Activated CD8-positive, alpha-beta T cell treated with anti-CD3 and anti-CD28 coated beads for 36 hours (primary cell): ENCODE measurements at regions of chrX and their contacts with region 1.

Region 1: GRCh38 chrX:48737213-48737938 is 24.2 kb upstream of the GLOD5 start:
- DNase-seq: peak; percentile 92
- ATAC-seq: peak; percentile 97
- H3K4me3 Mint-ChIP-seq: peak overlapping the region; percentile 95
- H3K27ac Mint-ChIP-seq: peak overlapping the region; percentile 96
- H3K4me1 Mint-ChIP-seq: peaks cover 14% of the 10 kb centered on the region
- H3K27me3 Mint-ChIP-seq: no peaks in the 10 kb centered on the region
- CTCF ChIP-seq: no peak

Region 2: GRCh38 chrX:48683411-48683982 is 53.9 kb before region 1 on chrX and contains the start of gene WAS:
- CTCF ChIA-PET with region 1: no interaction called
- POLR2A ChIA-PET with region 1: interaction called, 6 read pairs
- intact Hi-C with region 1: loop called (anchors 5 kb)
- DNase-seq: peak; percentile 74
- ATAC-seq: peak; percentile 93
- H3K4me3 Mint-ChIP-seq: peak within 1 kb of the TSS; percentile 80
- H3K27ac Mint-ChIP-seq: peak within 1 kb of the TSS; percentile 98
- H3K4me1 Mint-ChIP-seq: peaks cover 50% of the 10 kb centered on the region
- H3K27me3 Mint-ChIP-seq: no peaks in the 10 kb centered on the region
- CTCF ChIP-seq: no peak
- total RNA-seq, gene WAS: 81.6 to 81.9 TPM

Region 3: GRCh38 chrX:48696301-48697181 is 40.8 kb before region 1 on chrX and contains the start of gene SUV39H1:
- CTCF ChIA-PET with region 1: no interaction called
- POLR2A ChIA-PET with region 1: interaction called, 15 read pairs
- intact Hi-C with region 1: no loop called
- DNase-seq: peak; percentile 87
- ATAC-seq: peak; percentile 94
- H3K4me3 Mint-ChIP-seq: peak within 1 kb of the TSS; percentile 81
- H3K27ac Mint-ChIP-seq: peak within 1 kb of the TSS; percentile 94
- H3K4me1 Mint-ChIP-seq: peaks cover 26% of the 10 kb centered on the region
- H3K27me3 Mint-ChIP-seq: no peaks in the 10 kb centered on the region
- CTCF ChIP-seq: no peak
- total RNA-seq, gene SUV39H1: 26.8 to 28.4 TPM

Region 4: GRCh38 chrX:48714573-48714972 is 22.8 kb before region 1 on chrX:
- CTCF ChIA-PET with region 1: no interaction called
- POLR2A ChIA-PET with region 1: interaction called, 14 read pairs
- intact Hi-C with region 1: no loop called
- DNase-seq: no peak
- ATAC-seq: peak; percentile 20
- H3K4me3 Mint-ChIP-seq: no peak overlapping the region
- H3K27ac Mint-ChIP-seq: peak overlapping the region; percentile 93
- H3K4me1 Mint-ChIP-seq: peaks cover 83% of the 10 kb centered on the region
- H3K27me3 Mint-ChIP-seq: no peaks in the 10 kb centered on the region
- CTCF ChIP-seq: no peak

Region 5: GRCh38 chrX:48770296-48770695 is 32.9 kb after region 1 on chrX:
- CTCF ChIA-PET with region 1: no interaction called
- POLR2A ChIA-PET with region 1: no interaction called
- intact Hi-C with region 1: no loop called
- DNase-seq: no peak
- ATAC-seq: no peak
- H3K4me3 Mint-ChIP-seq: no peak overlapping the region
- H3K27ac Mint-ChIP-seq: no peak overlapping the region
- H3K4me1 Mint-ChIP-seq: no peaks in the 10 kb centered on the region
- H3K27me3 Mint-ChIP-seq: no peaks in the 10 kb centered on the region
- CTCF ChIP-seq: no peak